ENCODE measurements at regions of chr2 and their contacts with region 1.

Region 1: GRCh38 chr2:213010106-213010779 is 141.2 kb downstream of the IKZF2 start:
- DNase-seq: no peak
- ATAC-seq: no peak
- H3K4me3 Mint-ChIP-seq: no peak overlapping the region
- H3K27ac Mint-ChIP-seq: no peak overlapping the region
- H3K4me1 Mint-ChIP-seq: peaks cover 12% of the 10 kb centered on the region
- H3K27me3 Mint-ChIP-seq: no peaks in the 10 kb centered on the region
- CTCF ChIP-seq: no peak

Region 2: GRCh38 chr2:212686285-212686895 is 323.9 kb before region 1 on chr2:
- CTCF ChIA-PET with region 1: no interaction called
- POLR2A ChIA-PET with region 1: no interaction called
- intact Hi-C with region 1: no loop called
- DNase-seq: no peak
- ATAC-seq: peak; percentile 45
- H3K4me3 Mint-ChIP-seq: no peak overlapping the region
- H3K27ac Mint-ChIP-seq: no peak overlapping the region
- H3K4me1 Mint-ChIP-seq: no peaks in the 10 kb centered on the region
- H3K27me3 Mint-ChIP-seq: peaks cover 4% of the 10 kb centered on the region
- CTCF ChIP-seq: peak; percentile 81

Region 3: DNA sequence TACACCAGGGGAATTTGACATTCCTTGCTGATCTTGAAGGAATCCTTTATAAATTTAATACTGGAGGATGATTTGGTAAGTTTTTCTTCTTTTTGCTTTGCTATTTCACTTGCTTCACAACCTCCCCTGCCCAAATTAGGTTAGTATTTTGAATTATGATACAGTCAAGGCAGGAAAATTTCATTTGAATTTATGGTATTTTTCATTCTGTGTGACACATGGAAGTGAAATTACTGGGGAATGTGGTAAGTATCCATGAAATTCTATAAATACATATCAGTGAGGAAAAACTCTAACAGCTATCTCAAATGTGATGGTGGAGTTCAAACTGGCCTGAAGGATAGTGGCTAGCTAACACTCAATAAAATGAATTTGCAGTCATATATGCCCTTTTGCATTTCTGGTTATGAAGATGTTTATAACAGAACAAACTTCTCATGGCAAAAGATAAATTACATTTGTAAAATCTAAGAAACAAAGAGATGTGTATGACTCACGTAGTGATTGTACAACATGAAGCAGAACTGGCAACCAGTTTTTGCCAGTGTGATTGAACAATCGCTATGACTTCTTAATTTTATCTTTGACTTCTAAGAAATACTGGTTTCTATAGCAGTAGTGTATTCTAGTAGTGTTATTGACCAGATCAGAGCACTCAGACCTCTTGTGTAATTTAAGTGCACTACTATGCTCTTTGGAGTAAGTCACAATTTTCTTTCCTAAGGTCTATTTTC is 11.4 kb before region 1 on chr2:
- CTCF ChIA-PET with region 1: no interaction called
- POLR2A ChIA-PET with region 1: no interaction called
- intact Hi-C with region 1: loop called (anchors 1 kb)
- DNase-seq: no peak
- ATAC-seq: no peak
- H3K4me3 Mint-ChIP-seq: no peak overlapping the region
- H3K27ac Mint-ChIP-seq: no peak overlapping the region
- H3K4me1 Mint-ChIP-seq: peaks cover 18% of the 10 kb centered on the region
- H3K27me3 Mint-ChIP-seq: no peaks in the 10 kb centered on the region
- CTCF ChIP-seq: no peak